GM12878 (cell line): ENCODE measurements at regions of chr15 and their contacts with region 1.

Region 1: GRCh38 chr15:44728576-44729407 is 7.5 kb upstream of the TRIM69 start:
- DNase-seq: peak; percentile 100
- ATAC-seq: peak; percentile 78
- H3K4me3 ChIP-seq: peak overlapping the region; percentile 96
- H3K27ac ChIP-seq: peak overlapping the region; percentile 99
- H3K4me1 ChIP-seq: peaks cover 32% of the 10 kb centered on the region
- H3K27me3 ChIP-seq: no peaks in the 10 kb centered on the region
- CTCF ChIP-seq: no peak
- EP300 ChIP-seq: peak; percentile 35 to 82; a peak in 3 of 4 replicates
- POLR2A ChIP-seq: peak; percentile 92
- RAD21 ChIP-seq: peak; percentile 26; the same call in 1 of the 2 replicates

Region 2: GRCh38 chr15:43791993-43792760 is 936.6 kb before region 1 on chr15 and contains the start of gene SERF2:
- CTCF ChIA-PET with region 1: no interaction called
- POLR2A ChIA-PET with region 1: no interaction called
- RAD21 ChIA-PET with region 1: no interaction called
- SMC1A ChIA-PET with region 1: no interaction called
- in situ Hi-C with region 1: loop called (anchors 10 kb)
- intact Hi-C with region 1: no loop called
- DNase-seq: peak; percentile 99
- ATAC-seq: peak; percentile 92
- H3K4me3 ChIP-seq: peak within 1 kb of the TSS; percentile 96
- H3K27ac ChIP-seq: peak within 1 kb of the TSS; percentile 99
- H3K4me1 ChIP-seq: peaks cover 34% of the 10 kb centered on the region
- H3K27me3 ChIP-seq: no peaks in the 10 kb centered on the region
- CTCF ChIP-seq: no peak
- EP300 ChIP-seq: peak in 1 of 2 experiments; percentile 24; a peak in 1 of 4 replicates
- POLR2A ChIP-seq: peak; percentile 98
- RAD21 ChIP-seq: no peak
- polyA plus RNA-seq, gene SERF2: 4,056 to 4,159 TPM

Region 3: GRCh38 chr15:44593042-44593736 is 135.6 kb before region 1 on chr15:
- CTCF ChIA-PET with region 1: interaction called, 73 read pairs
- POLR2A ChIA-PET with region 1: interaction called, 11 read pairs
- RAD21 ChIA-PET with region 1: no interaction called
- SMC1A ChIA-PET with region 1: no interaction called
- in situ Hi-C with region 1: no loop called
- intact Hi-C with region 1: no loop called
- DNase-seq: no peak
- ATAC-seq: peak; percentile 72
- H3K4me3 ChIP-seq: no peak overlapping the region
- H3K27ac ChIP-seq: no peak overlapping the region
- H3K4me1 ChIP-seq: peaks cover 7% of the 10 kb centered on the region; the same call in 1 of the 2 replicates
- H3K27me3 ChIP-seq: no peaks in the 10 kb centered on the region
- CTCF ChIP-seq: peak; percentile 42 to 54 (median 42); a peak in 5 of 6 replicates
- EP300 ChIP-seq: no peak
- POLR2A ChIP-seq: no peak
- RAD21 ChIP-seq: peak; percentile 53

Region 4: DNA sequence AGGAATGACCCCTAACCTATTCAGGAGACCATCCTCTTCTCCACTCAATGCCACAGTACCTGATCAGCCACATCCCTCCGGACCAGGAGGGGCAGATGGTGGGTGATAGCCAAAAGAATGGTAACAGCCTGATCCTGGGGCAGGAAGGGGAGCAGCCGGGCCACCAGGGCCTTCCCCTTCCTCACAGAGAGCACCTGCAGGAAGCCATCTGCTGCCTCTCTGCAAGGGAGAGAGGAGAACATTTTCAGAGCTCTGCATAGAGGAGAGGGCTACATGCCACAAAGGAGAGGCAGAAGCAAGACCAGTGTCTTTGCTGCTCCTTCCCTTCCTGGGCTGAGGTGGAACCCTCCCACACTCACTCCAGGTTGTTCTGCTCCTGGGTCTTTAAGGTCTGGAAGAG is 59.9 kb before region 1 on chr15:
- CTCF ChIA-PET with region 1: interaction called, 454 read pairs
- POLR2A ChIA-PET with region 1: interaction called, 194 read pairs
- RAD21 ChIA-PET with region 1: interaction called, 680 read pairs
- SMC1A ChIA-PET with region 1: interaction called, 383 read pairs
- in situ Hi-C with region 1: no loop called
- intact Hi-C with region 1: no loop called
- DNase-seq: no peak
- ATAC-seq: no peak
- H3K4me3 ChIP-seq: no peak overlapping the region
- H3K27ac ChIP-seq: no peak overlapping the region
- H3K4me1 ChIP-seq: peaks cover 62% of the 10 kb centered on the region
- H3K27me3 ChIP-seq: no peaks in the 10 kb centered on the region
- CTCF ChIP-seq: no peak
- EP300 ChIP-seq: no peak
- POLR2A ChIP-seq: no peak
- RAD21 ChIP-seq: no peak

Region 5: DNA sequence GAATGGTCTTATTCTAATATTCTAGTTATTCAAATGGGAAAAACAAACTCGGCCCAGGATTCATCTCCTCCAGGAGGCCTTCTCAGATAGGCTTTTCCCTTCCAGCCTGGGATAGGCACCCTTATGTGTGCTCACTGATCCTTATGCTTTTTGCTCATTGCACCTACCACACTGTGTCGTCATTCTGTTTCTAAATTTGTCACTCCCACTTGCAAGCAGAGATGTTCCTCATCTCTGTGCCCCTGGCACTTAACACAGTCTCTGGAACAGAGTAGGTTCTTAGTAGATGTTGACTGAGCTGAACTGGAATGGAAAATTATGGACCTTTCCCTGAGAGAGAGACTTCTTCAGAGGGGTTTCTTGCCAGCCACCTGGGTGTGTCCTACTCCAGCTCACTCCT is 46.6 kb before region 1 on chr15:
- CTCF ChIA-PET with region 1: no interaction called
- POLR2A ChIA-PET with region 1: interaction called, 11 read pairs
- RAD21 ChIA-PET with region 1: interaction called, 8 read pairs
- SMC1A ChIA-PET with region 1: interaction called, 9 read pairs
- in situ Hi-C with region 1: no loop called
- intact Hi-C with region 1: no loop called
- DNase-seq: no peak
- ATAC-seq: peak; percentile 71
- H3K4me3 ChIP-seq: no peak overlapping the region
- H3K27ac ChIP-seq: no peak overlapping the region
- H3K4me1 ChIP-seq: peaks cover 28% of the 10 kb centered on the region
- H3K27me3 ChIP-seq: no peaks in the 10 kb centered on the region
- CTCF ChIP-seq: no peak
- EP300 ChIP-seq: no peak
- POLR2A ChIP-seq: no peak
- RAD21 ChIP-seq: no peak

Region 6: DNA sequence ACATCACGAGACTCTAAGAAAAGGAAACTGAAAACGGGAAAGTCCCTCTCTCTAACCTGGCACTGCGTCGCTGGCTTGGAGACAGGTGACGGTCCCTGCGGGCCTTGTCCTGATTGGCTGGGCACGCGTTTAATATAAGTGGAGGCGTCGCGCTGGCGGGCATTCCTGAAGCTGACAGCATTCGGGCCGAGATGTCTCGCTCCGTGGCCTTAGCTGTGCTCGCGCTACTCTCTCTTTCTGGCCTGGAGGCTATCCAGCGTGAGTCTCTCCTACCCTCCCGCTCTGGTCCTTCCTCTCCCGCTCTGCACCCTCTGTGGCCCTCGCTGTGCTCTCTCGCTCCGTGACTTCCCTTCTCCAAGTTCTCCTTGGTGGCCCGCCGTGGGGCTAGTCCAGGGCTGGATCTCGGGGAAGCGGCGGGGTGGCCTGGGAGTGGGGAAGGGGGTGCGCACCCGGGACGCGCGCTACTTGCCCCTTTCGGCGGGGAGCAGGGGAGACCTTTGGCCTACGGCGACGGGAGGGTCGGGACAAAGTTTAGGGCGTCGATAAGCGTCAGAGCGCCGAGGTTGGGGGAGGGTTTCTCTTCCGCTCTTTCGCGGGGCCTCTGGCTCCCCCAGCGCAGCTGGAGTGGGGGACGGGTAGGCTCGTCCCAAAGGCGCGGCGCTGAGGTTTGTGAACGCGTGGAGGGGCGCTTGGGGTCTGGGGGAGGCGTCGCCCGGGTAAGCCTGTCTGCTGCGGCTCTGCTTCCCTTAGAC is 17.3 kb before region 1 on chr15 and contains the start of gene B2M:
- CTCF ChIA-PET with region 1: interaction called, 278 read pairs
- POLR2A ChIA-PET with region 1: interaction called, 718 read pairs
- RAD21 ChIA-PET with region 1: interaction called, 653 read pairs
- SMC1A ChIA-PET with region 1: interaction called, 637 read pairs
- in situ Hi-C with region 1: no loop called
- intact Hi-C with region 1: loop called (anchors 1 kb)
- DNase-seq: peak; percentile 94
- ATAC-seq: peak; percentile 74
- H3K4me3 ChIP-seq: peak within 1 kb of the TSS; percentile 99
- H3K27ac ChIP-seq: peak within 1 kb of the TSS; percentile 99
- H3K4me1 ChIP-seq: peaks cover 16% of the 10 kb centered on the region
- H3K27me3 ChIP-seq: no peaks in the 10 kb centered on the region
- CTCF ChIP-seq: no peak
- EP300 ChIP-seq: no peak; a peak in 1 of 4 replicates
- POLR2A ChIP-seq: peak; percentile 98
- RAD21 ChIP-seq: no peak
- polyA plus RNA-seq, gene B2M: 16,306 to 22,794 TPM

Region 7: GRCh38 chr15:44882499-44882968 is 153.7 kb after region 1 on chr15:
- CTCF ChIA-PET with region 1: no interaction called
- POLR2A ChIA-PET with region 1: interaction called, 3 read pairs
- RAD21 ChIA-PET with region 1: interaction called, 4 read pairs
- SMC1A ChIA-PET with region 1: interaction called, 3 read pairs
- in situ Hi-C with region 1: no loop called
- intact Hi-C with region 1: loop called (anchors 2 kb)
- DNase-seq: peak; percentile 92
- ATAC-seq: peak; percentile 84
- H3K4me3 ChIP-seq: peak overlapping the region; percentile 76
- H3K27ac ChIP-seq: peak overlapping the region; percentile 82
- H3K4me1 ChIP-seq: peaks cover 16% of the 10 kb centered on the region
- H3K27me3 ChIP-seq: no peaks in the 10 kb centered on the region
- CTCF ChIP-seq: no peak
- EP300 ChIP-seq: peak; percentile 85 to 86; a peak in 3 of 4 replicates
- POLR2A ChIP-seq: peak; percentile 65
- RAD21 ChIP-seq: no peak